Activated B cell treated with CpG ODN at 0.5 μM for 24 hours (primary cell): ENCODE measurements at regions of chr4 and their contacts with region 1.

Region 1: DNA sequence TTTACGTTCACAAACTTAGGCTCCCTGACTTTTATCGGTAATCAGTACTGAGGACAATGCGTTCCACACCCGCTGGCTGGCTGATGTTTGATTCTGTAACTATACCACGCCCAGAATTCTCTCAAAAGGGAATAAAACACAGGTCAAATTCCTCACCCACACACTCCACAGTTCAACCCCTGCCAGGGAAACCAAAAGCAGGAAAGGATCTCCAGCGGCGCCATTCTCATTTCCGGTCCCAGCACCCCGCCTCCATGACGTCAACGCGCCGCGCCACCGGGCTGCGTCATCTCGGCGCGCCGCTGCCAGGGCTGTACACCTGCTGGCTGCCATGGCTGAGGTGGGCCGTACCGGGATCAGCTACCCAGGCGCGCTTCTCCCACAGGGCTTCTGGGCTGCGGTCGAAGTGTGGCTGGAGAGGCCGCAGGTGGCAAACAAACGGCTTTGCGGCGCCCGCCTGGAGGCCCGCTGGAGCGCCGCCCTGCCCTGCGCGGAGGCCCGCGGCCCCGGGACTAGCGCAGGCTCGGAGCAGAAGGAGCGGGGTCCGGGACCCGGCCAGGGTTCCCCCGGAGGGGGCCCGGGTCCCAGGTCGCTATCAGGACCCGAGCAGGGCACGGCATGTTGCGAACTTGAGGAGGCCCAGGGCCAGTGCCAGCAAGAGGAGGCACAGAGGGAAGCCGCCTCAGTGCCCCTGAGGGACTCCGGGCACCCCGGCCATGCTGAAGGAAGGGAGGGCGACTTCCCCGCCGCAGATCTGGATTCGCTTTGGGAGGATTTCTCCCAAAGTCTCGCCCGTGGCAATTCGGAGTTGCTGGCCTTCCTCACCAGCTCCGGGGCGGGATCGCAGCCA is at the starts of genes ACOX3 and TRMT44:
- DNase-seq: peak; percentile 100
- ATAC-seq: peak; percentile 85
- H3K4me3 Mint-ChIP-seq: peak within 1 kb of the TSS; percentile 97
- H3K27ac Mint-ChIP-seq: peak within 1 kb of the TSS; percentile 98
- H3K4me1 Mint-ChIP-seq: peaks cover 60% of the 10 kb centered on the region
- H3K27me3 Mint-ChIP-seq: no peaks in the 10 kb centered on the region
- CTCF ChIP-seq: no peak
- total RNA-seq, gene ACOX3: 17.1 and 20.6 TPM in 2 replicates
- total RNA-seq, gene TRMT44: 29.3 and 33.8 TPM in 2 replicates

Region 2: DNA sequence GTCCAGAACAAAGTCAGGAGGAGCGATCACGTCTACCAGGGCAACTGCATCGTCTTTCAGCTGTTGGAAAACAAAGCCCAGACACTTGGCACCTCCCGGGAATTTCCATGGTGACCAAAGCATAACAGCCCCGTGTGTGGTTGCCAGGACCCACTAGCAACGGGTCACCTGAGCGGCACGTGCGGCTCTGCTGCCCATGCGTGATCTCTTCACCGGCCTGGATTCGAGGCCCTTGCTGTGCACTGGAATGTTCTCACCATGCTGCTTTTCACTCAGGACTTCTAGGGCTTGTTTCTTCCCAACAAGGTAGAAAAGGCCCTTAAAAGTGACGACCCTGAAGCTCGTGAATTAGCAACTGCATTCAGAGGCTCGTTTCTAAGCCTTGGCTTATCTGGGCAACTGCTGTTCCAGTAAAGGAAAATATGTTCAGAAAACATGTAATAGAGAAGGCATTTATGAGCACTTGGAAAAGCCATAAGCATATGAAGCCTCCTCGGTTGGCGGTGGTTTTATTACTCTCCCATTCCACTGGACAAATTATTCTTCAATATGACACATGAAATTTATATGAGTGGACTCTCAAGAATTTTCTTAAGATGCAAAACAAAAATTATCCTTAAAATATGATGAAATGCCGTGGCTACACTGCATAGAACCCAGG is 69.7 kb before region 1 on chr4:
- CTCF ChIA-PET with region 1: no interaction called
- POLR2A ChIA-PET with region 1: no interaction called
- intact Hi-C with region 1: no loop called
- DNase-seq: no peak
- ATAC-seq: no peak
- H3K4me3 Mint-ChIP-seq: no peak overlapping the region
- H3K27ac Mint-ChIP-seq: no peak overlapping the region
- H3K4me1 Mint-ChIP-seq: no peaks in the 10 kb centered on the region
- H3K27me3 Mint-ChIP-seq: no peaks in the 10 kb centered on the region
- CTCF ChIP-seq: no peak

Region 3: GRCh38 chr4:8428293-8429097 is 12.2 kb before region 1 on chr4:
- CTCF ChIA-PET with region 1: no interaction called
- POLR2A ChIA-PET with region 1: interaction called, 44 read pairs
- intact Hi-C with region 1: loop called (anchors 1 kb)
- DNase-seq: peak; percentile 98
- ATAC-seq: peak; percentile 95
- H3K4me3 Mint-ChIP-seq: peak overlapping the region; percentile 95
- H3K27ac Mint-ChIP-seq: peak overlapping the region; percentile 93
- H3K4me1 Mint-ChIP-seq: peaks cover 32% of the 10 kb centered on the region
- H3K27me3 Mint-ChIP-seq: no peaks in the 10 kb centered on the region
- CTCF ChIP-seq: no peak

Region 4: GRCh38 chr4:8644461-8644891 is 203.8 kb after region 1 on chr4:
- CTCF ChIA-PET with region 1: no interaction called
- POLR2A ChIA-PET with region 1: no interaction called
- intact Hi-C with region 1: no loop called
- DNase-seq: no peak
- ATAC-seq: no peak
- H3K4me3 Mint-ChIP-seq: no peak overlapping the region
- H3K27ac Mint-ChIP-seq: no peak overlapping the region
- H3K4me1 Mint-ChIP-seq: no peaks in the 10 kb centered on the region
- H3K27me3 Mint-ChIP-seq: no peaks in the 10 kb centered on the region
- CTCF ChIP-seq: no peak